K562 (cell line): ENCODE measurements at regions of chr22 and their contacts with region 1.

Region 1: GRCh38 chr22:23128269-23129108 is 13.3 kb downstream of the RSPH14 start:
- DNase-seq: peak; percentile 61 to 98 (median 62)
- ATAC-seq: peak; percentile 91
- H3K4me3 ChIP-seq: no peak overlapping the region
- H3K27ac ChIP-seq: no peak overlapping the region
- H3K4me1 ChIP-seq: peaks cover 0 to 9% of the 10 kb centered on the region in 2 experiments; a peak in 2 of 5 replicates
- H3K27me3 ChIP-seq: peaks cover 53 to 79% of the 10 kb centered on the region in 2 experiments
- CTCF ChIP-seq: peak in 1 of 3 experiments; percentile 100; a peak in 2 of 6 replicates
- EP300 ChIP-seq: peak; percentile 83
- POLR2A ChIP-seq: no peak
- RAD21 ChIP-seq: peak in 1 of 2 experiments; percentile 100; a peak in 2 of 4 replicates

Region 2: GRCh38 chr22:22753526-22754267 is 374.8 kb before region 1 on chr22:
- CTCF ChIA-PET with region 1: no interaction called
- POLR2A ChIA-PET with region 1: no interaction called
- in situ Hi-C with region 1: no loop called
- intact Hi-C with region 1: loop called (anchors 1 kb)
- DNase-seq: peak; percentile 96 to 100 (median 100)
- ATAC-seq: peak; percentile 97
- H3K4me3 ChIP-seq: no peak overlapping the region
- H3K27ac ChIP-seq: no peak overlapping the region
- H3K4me1 ChIP-seq: no peaks in the 10 kb centered on the region
- H3K27me3 ChIP-seq: peaks cover 2 to 20% of the 10 kb centered on the region in 2 experiments; a peak in 3 of 5 replicates
- CTCF ChIP-seq: peak in 1 of 3 experiments; percentile 100; a peak in 2 of 6 replicates
- EP300 ChIP-seq: no peak; the same call in 1 of the 2 replicates
- POLR2A ChIP-seq: no peak
- RAD21 ChIP-seq: peak in 1 of 2 experiments; percentile 98; a peak in 2 of 4 replicates

Region 3: GRCh38 chr22:22810018-22810427 is 318.5 kb before region 1 on chr22:
- CTCF ChIA-PET with region 1: interaction called, 19 read pairs
- POLR2A ChIA-PET with region 1: no interaction called
- in situ Hi-C with region 1: no loop called
- intact Hi-C with region 1: loop called (anchors 1 kb)
- DNase-seq: peak; percentile 97 to 100 (median 98)
- ATAC-seq: peak; percentile 96
- H3K4me3 ChIP-seq: no peak overlapping the region
- H3K27ac ChIP-seq: no peak overlapping the region
- H3K4me1 ChIP-seq: peaks cover 0 to 4% of the 10 kb centered on the region in 2 experiments; a peak in 1 of 5 replicates
- H3K27me3 ChIP-seq: peaks cover 8 to 19% of the 10 kb centered on the region in 2 experiments; a peak in 3 of 5 replicates
- CTCF ChIP-seq: no peak
- EP300 ChIP-seq: no peak
- POLR2A ChIP-seq: no peak
- RAD21 ChIP-seq: no peak

Region 4: DNA sequence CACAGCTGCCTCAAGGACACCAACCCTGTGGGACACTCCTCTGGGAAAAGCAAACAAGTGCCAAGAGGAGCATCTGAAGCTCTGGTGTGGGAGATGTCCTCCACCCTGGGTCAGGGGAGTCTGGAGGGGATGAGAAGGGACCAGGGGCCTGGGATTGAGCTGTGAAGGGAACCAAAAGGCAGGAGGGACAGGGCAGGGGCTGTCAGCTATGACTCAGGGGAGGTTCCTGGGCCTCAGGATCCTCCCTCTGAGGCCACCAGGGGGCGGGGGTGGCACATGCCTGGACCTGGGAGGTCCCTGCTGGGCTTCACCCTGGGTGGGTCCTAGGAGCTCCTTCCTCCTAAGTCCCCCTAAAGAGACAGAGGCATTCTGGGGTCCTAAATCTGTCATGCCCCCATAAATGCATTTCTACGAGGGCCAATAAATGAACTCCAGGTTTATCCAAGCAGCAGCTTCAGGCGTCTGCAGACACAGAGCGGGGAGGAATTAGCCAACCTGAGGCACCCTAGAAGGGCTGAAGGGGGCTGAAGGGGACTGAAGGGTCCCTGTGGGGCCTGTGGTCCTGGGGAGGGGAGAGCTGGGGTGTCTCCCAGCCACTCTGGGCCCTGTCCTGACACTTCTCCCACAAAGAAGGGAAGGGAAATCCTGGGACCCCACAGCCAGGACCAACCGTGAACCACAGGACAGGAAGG is 272.7 kb before region 1 on chr22:
- CTCF ChIA-PET with region 1: interaction called, 21 read pairs
- POLR2A ChIA-PET with region 1: interaction called, 4 read pairs
- in situ Hi-C with region 1: no loop called
- intact Hi-C with region 1: loop called (anchors 1 kb)
- DNase-seq: peak; percentile 93 to 100 (median 98)
- ATAC-seq: peak; percentile 98
- H3K4me3 ChIP-seq: no peak overlapping the region
- H3K27ac ChIP-seq: no peak overlapping the region
- H3K4me1 ChIP-seq: no peaks in the 10 kb centered on the region
- H3K27me3 ChIP-seq: peaks cover 22 to 38% of the 10 kb centered on the region in 2 experiments
- CTCF ChIP-seq: no peak
- EP300 ChIP-seq: no peak
- POLR2A ChIP-seq: no peak
- RAD21 ChIP-seq: no peak

Region 5: DNA sequence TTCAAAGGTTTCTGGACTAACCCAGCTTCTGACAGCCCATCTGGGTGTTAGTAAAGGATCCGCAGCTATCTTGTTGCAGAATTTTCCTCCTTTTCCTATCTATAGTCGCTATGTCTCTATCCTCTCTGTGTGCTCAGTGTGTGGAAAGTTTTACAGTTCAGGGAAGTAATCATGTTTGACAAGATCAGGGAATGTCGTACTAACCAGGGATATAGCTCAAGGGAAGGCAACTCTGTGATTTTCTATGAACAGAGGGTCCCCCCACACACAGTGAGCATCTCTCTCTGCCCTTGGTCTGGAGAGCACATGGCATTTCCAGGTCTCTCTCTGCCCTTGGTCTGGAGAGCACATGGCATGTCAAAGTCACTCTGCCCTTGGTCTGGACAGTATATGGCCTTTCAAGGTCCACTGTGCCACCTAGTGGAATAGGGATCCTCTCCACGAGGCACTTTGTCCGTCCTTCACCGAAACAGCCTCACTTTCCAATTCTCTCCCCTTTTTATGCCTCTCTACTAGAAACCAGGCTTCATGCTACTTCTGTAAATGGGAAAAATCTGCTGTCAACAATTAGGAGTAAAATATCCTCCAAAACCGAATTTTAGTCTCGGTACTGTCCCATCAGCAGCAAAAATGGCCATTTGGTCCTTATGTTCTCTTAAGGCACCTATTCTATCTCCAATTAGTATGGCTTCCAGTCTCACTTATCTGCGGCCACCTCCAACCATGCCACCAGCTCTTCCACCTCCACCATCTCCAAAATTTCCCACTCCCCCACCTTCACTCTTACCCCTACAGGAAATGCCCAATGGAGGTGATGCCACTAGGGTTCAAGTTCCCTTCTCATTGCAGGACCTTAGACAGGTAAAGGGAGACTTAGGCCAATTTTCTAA is 152.2 kb before region 1 on chr22:
- CTCF ChIA-PET with region 1: no interaction called
- POLR2A ChIA-PET with region 1: interaction called, 14 read pairs
- in situ Hi-C with region 1: no loop called
- intact Hi-C with region 1: no loop called
- DNase-seq: peak in 3 of 4 experiments; percentile 40 to 69 (median 61)
- ATAC-seq: peak; percentile 86
- H3K4me3 ChIP-seq: no peak overlapping the region
- H3K27ac ChIP-seq: no peak overlapping the region
- H3K4me1 ChIP-seq: no peaks in the 10 kb centered on the region
- H3K27me3 ChIP-seq: peaks cover 0 to 4% of the 10 kb centered on the region in 2 experiments; a peak in 1 of 5 replicates
- CTCF ChIP-seq: no peak
- EP300 ChIP-seq: no peak
- POLR2A ChIP-seq: no peak
- RAD21 ChIP-seq: no peak

Region 6: GRCh38 chr22:23144932-23145873 is 16.7 kb after region 1 on chr22 and contains the start of gene RAB36:
- CTCF ChIA-PET with region 1: interaction called, 3 read pairs
- POLR2A ChIA-PET with region 1: interaction called, 68 read pairs
- in situ Hi-C with region 1: no loop called
- intact Hi-C with region 1: no loop called
- DNase-seq: peak; percentile 60 to 100 (median 100)
- ATAC-seq: peak; percentile 90
- H3K4me3 ChIP-seq: no peak within 1 kb of the TSS
- H3K27ac ChIP-seq: no peak within 1 kb of the TSS
- H3K4me1 ChIP-seq: peaks cover 16 to 30% of the 10 kb centered on the region in 2 experiments
- H3K27me3 ChIP-seq: peaks cover 31 to 42% of the 10 kb centered on the region in 2 experiments
- CTCF ChIP-seq: no peak
- EP300 ChIP-seq: no peak
- POLR2A ChIP-seq: no peak
- RAD21 ChIP-seq: no peak
- polyA plus RNA-seq, gene RAB36: 0.04 to 0.08 TPM